ENCODE measurements at regions of chr10 and their contacts with region 1.

Region 1: GRCh38 chr10:102476466-102477141 is 25.3 kb upstream of the C10orf95 start:
- DNase-seq: no peak
- ATAC-seq: no peak

Region 2: DNA sequence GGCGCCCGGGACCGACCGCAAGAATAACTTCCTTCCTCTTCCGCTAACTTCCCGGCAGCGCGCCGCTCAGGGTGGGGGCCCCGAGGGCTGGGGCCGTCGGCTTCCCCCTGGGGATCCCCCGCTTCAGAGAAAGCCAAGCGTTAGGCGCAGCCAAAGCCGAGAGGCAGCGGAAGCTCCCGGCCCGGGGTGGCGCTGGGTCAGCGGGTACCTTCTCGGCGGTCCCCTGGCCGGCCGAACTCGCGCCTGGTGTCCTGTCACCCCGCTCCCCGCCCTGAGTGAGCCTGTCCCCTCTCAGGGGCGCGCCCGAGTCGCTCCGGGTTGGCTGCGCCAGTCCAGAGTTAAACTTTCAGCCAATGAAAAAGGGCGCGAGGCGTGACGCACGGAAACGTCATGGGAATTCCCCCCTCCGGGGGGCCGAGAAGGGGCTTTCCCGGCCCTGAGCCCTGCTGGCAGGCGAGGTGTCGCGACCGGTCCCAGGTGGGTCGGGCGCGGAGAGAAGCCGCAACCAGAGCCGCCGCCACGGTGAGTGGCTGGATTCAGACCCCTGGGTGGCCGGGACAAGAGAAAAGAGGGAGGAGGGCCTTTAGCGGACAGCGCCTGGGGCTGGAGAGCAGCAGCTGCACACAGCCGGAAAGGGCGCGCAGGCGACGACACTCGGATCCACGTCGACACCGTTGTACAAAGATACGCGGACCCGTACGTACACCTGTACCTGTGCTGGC is 82.4 kb before region 1 on chr10:
- intact Hi-C with region 1: loop called (anchors 10 kb)
- DNase-seq: peak; percentile 98
- ATAC-seq: peak; percentile 91

Measured in sciatic nerve (tissue), 2 donors.